Sigmoid colon (tissue), 7 donors: ENCODE measurements at regions of chr7 and their contacts with region 1.

Region 1: DNA sequence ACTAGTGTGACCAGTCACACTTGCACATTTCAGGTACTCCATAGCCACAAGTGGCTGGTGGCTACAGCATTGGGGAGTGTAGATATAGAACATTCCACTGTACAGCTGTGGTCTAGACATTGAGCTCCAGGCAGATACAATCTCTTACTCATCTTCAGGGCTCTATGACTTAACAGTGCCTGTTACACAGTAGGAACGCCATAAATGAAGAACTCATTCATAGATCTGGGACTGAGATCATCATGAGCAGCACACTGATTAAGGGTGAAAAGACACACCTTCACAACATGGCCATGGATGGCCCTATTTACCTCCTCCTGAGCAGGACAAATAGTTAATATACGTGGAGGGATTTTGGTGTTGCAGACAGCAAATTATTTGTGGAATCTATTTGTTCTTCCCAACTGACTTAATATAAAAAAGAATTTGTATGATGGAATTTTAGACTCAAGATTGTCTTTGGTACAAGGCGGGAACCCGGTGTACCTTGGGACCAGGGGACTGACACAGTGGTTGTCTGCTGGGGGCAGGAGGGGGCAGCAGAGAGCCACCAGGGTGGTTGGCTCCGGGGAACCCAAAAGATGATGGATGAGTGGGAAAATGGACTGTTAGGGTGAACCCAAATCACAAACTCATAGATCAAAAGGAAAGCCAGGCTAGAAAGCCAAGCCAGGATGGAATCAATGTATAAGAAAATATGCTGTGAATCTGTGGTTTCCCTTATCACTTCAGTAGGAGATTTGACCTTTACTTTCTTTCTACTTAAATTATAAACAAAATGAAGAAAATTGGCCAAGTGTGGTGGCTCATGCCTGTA is 24.3 kb upstream of the CPA2 start:
- DNase-seq: no peak
- H3K4me3 ChIP-seq: no peak overlapping the region
- H3K27ac ChIP-seq: no peak overlapping the region
- H3K4me1 ChIP-seq: no peaks in the 10 kb centered on the region
- H3K27me3 ChIP-seq: no peaks in the 10 kb centered on the region
- CTCF ChIP-seq: peak; percentile 35 to 70 (median 68)
- EP300 ChIP-seq: no peak
- POLR2A ChIP-seq: no peak

Region 2: GRCh38 chr7:130721486-130722280 is 479.3 kb after region 1 on chr7:
- intact Hi-C with region 1: loop called (anchors 10 kb)
- DNase-seq: peak; percentile 72
- H3K4me3 ChIP-seq: no peak overlapping the region
- H3K27ac ChIP-seq: no peak overlapping the region
- H3K4me1 ChIP-seq: no peaks in the 10 kb centered on the region
- H3K27me3 ChIP-seq: no peaks in the 10 kb centered on the region
- CTCF ChIP-seq: peak in 3 of 4 experiments; percentile 33 to 51 (median 33)
- EP300 ChIP-seq: no peak
- POLR2A ChIP-seq: no peak